HepG2 (cell line): ENCODE measurements at regions of chr4 and their contacts with region 1.

Region 1: DNA sequence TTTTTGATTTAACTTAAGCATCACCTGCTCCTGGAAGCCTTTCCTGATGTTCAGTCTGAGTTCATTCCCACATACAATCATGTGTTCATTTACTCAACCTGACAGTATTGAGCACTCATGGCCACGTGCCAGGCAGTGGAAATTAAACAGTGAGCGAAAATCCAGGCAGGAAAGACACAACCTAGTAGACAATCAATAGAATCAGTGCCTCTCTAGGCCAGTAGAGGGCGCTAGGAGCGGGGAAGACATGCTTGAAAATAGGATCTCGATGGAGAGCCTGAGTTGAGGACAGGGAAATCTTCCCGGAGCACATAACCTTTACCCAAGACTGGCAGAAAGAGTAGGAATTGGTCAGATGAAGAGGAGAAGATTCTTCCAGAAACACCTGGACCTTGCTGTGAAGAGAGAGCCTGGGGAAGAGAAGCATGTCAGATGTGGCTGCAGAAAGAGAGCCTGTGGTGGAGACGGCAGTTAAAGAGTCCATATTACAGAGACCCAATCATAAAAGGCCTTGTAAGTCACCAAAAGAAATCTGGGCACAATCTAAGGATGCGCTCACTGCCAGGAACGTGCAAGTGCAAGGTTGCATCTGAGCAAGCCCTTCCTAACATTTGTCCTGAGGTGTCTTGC is 103.5 kb downstream of the LDB2 start:
- DNase-seq: peak; percentile 63
- ATAC-seq: peak; percentile 88
- H3K4me3 ChIP-seq: no peak overlapping the region
- H3K27ac ChIP-seq: no peak overlapping the region
- H3K4me1 ChIP-seq: no peaks in the 10 kb centered on the region; the same call in 1 of the 2 replicates
- H3K27me3 ChIP-seq: no peaks in the 10 kb centered on the region
- CTCF ChIP-seq: peak; percentile 91
- EP300 ChIP-seq: no peak
- POLR2A ChIP-seq: no peak
- RAD21 ChIP-seq: peak; percentile 82

Region 2: DNA sequence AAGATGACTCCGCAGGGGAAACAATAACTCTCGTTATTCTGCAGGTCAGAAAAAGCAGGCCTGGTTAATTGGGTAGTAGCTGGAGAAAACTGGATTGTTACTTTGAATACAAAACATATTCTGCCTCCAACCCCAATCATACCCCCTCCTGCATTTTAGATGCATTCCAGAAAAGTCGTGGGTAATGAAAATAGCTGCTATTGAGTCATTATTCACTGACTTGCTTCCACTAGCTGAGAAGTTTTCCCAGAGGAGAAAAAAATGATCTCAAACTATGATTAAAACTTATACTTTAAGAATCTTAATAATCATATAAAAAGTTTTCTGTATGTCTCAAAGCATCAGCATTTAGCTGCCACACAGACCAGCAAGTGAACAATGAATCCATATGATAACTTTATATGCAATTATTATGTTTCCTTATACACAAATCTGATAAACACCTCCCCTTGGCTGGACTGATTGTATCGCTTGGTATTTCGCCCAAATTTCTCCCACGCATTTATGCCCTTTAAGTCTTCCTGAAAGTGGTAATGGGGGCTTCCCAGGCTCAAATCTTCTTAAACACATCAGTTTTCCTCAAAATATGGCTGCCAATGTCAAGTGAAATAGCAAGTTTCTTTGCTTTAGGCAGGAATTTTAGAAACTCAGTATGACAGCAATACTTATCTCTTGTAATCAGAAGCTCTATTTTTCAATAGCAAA is 77.5 kb before region 1 on chr4:
- CTCF ChIA-PET with region 1: no interaction called
- POLR2A ChIA-PET with region 1: no interaction called
- in situ Hi-C with region 1: no loop called
- intact Hi-C with region 1: no loop called
- DNase-seq: no peak
- ATAC-seq: no peak
- H3K4me3 ChIP-seq: no peak overlapping the region
- H3K27ac ChIP-seq: no peak overlapping the region
- H3K4me1 ChIP-seq: peaks cover 4% of the 10 kb centered on the region
- H3K27me3 ChIP-seq: no peaks in the 10 kb centered on the region
- CTCF ChIP-seq: no peak
- EP300 ChIP-seq: no peak
- POLR2A ChIP-seq: no peak
- RAD21 ChIP-seq: no peak

Region 3: GRCh38 chr4:16830081-16830480 is 35.1 kb after region 1 on chr4:
- CTCF ChIA-PET with region 1: no interaction called
- POLR2A ChIA-PET with region 1: no interaction called
- in situ Hi-C with region 1: no loop called
- intact Hi-C with region 1: no loop called
- DNase-seq: no peak
- ATAC-seq: no peak
- H3K4me3 ChIP-seq: no peak overlapping the region
- H3K27ac ChIP-seq: no peak overlapping the region
- H3K4me1 ChIP-seq: peaks cover 58% of the 10 kb centered on the region
- H3K27me3 ChIP-seq: no peaks in the 10 kb centered on the region
- CTCF ChIP-seq: no peak
- EP300 ChIP-seq: no peak
- POLR2A ChIP-seq: no peak
- RAD21 ChIP-seq: no peak

Region 4: DNA sequence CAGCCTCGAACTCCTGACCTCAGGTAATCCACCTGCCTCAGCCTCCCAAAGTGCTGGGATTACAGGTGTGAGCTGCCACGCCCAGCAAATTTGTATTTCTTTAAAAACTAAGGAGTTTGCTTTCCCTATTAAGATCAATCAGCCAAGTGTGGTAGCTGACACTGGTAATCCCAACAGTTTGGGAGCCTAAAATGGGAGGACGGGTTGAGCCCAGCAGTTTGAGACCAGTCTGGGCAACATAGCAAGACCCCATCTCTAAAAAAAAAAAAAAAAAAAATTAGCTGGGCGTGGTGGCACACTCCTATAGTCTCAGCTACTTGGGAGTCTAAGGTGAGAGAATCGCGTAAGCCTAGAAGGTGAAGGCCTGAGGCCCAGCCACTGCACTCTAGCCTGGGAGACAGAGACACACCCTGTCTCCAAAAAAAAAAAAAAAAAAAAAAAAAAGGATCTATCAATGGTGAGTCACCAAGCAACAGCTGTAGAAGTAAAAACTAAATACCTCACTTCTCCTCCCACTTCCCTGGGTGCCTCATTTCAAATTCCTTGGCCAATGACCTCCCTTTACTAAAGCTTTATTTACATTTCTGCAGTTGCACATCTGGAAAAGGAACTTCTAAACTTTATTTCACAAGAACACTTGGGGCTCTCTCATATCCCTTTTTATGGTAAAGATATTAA is 49.0 kb after region 1 on chr4:
- CTCF ChIA-PET with region 1: no interaction called
- POLR2A ChIA-PET with region 1: no interaction called
- in situ Hi-C with region 1: no loop called
- intact Hi-C with region 1: loop called (anchors 2 kb)
- DNase-seq: peak; percentile 20
- ATAC-seq: no peak; the same call in 2 of the 3 replicates
- H3K4me3 ChIP-seq: peak overlapping the region in 1 of 3 experiments; percentile 45; a peak in 2 of 6 replicates
- H3K27ac ChIP-seq: no peak overlapping the region
- H3K4me1 ChIP-seq: peaks cover 31% of the 10 kb centered on the region
- H3K27me3 ChIP-seq: no peaks in the 10 kb centered on the region
- CTCF ChIP-seq: no peak
- EP300 ChIP-seq: 0 out of 4 replicates have a peak, but pooled peaks of 1 of the 2 experiments have one; percentile 22
- POLR2A ChIP-seq: no peak
- RAD21 ChIP-seq: no peak

Region 5: DNA sequence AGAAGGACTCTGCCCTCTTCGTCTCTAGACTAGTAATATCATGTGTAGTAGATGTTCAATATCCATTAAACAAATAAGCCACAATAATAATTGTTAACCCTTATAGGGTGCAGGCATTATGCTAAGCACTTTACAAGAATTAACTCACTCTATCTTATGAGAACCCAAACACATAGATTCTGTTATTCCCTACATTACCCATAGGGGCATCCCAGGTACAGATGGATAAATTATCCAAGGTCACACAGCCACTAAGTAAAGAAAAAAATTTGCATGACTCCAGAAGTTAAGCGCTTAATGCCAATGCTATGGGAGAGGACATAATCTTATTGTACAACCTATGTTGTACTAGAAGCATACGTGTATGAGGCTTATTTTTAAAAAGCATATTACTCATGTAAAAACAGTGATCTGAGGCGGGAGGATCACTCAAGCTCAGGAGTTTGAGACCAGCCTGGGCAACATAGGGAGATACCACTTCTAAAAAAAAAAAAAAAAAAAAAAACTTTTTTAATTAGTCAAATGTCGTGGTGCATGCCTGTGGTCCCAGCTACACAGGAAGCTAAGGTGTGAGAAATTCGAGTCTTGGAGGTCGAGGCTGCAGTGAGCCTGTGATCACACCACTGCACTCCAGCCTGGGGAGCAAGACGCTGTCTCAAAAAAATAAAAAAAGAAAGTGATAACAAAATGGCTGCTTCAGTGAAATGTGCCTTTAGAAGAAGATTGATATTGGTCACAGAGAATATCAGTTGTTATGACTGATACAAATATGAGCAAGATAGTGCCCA is 89.9 kb after region 1 on chr4:
- CTCF ChIA-PET with region 1: interaction called, 4 read pairs
- POLR2A ChIA-PET with region 1: no interaction called
- in situ Hi-C with region 1: no loop called
- intact Hi-C with region 1: loop called (anchors 1 kb)
- DNase-seq: peak; percentile 15
- ATAC-seq: peak; percentile 74
- H3K4me3 ChIP-seq: no peak overlapping the region
- H3K27ac ChIP-seq: no peak overlapping the region
- H3K4me1 ChIP-seq: no peaks in the 10 kb centered on the region
- H3K27me3 ChIP-seq: peaks cover 0 to 10% of the 10 kb centered on the region in 2 experiments; a peak in 2 of 5 replicates
- CTCF ChIP-seq: no peak
- EP300 ChIP-seq: no peak
- POLR2A ChIP-seq: no peak
- RAD21 ChIP-seq: no peak